ENCODE measurements at regions of chrX and their contacts with region 1.

Region 1: GRCh38 chrX:154490414-154491083 is at the start of gene SLC10A3:
- DNase-seq: peak; percentile 87 to 96 (median 90)
- ATAC-seq: peak; percentile 85
- H3K4me3 ChIP-seq: peak within 1 kb of the TSS; percentile 72
- H3K27ac ChIP-seq: peak within 1 kb of the TSS; percentile 87
- H3K4me1 ChIP-seq: peaks cover 36 to 73% of the 10 kb centered on the region in 2 experiments; a peak in 4 of 5 replicates
- H3K27me3 ChIP-seq: no peaks in the 10 kb centered on the region
- CTCF ChIP-seq: peak in 2 of 3 experiments; percentile 21 to 42; a peak in 2 of 6 replicates
- EP300 ChIP-seq: no peak
- POLR2A ChIP-seq: peak; percentile 78
- RAD21 ChIP-seq: peak in 1 of 2 experiments; percentile 11; a peak in 2 of 4 replicates
- polyA plus RNA-seq, gene SLC10A3: 5.2 to 6.0 TPM

Region 2: GRCh38 chrX:154378782-154379591 is 111.6 kb before region 1 on chrX and contains the start of gene EMD:
- CTCF ChIA-PET with region 1: no interaction called
- POLR2A ChIA-PET with region 1: no interaction called
- in situ Hi-C with region 1: no loop called
- intact Hi-C with region 1: loop called (anchors 10 kb)
- DNase-seq: peak; percentile 80 to 98 (median 88)
- ATAC-seq: peak; percentile 92
- H3K4me3 ChIP-seq: peak within 1 kb of the TSS; percentile 91
- H3K27ac ChIP-seq: peak within 1 kb of the TSS; percentile 96
- H3K4me1 ChIP-seq: peaks cover 16 to 57% of the 10 kb centered on the region in 2 experiments
- H3K27me3 ChIP-seq: no peaks in the 10 kb centered on the region
- CTCF ChIP-seq: no peak; a peak in 1 of 6 replicates
- EP300 ChIP-seq: peak; percentile 21; the same call in 1 of the 2 replicates
- POLR2A ChIP-seq: peak; percentile 79
- RAD21 ChIP-seq: no peak
- polyA plus RNA-seq, gene EMD: 2.3 to 3.1 TPM

Region 3: DNA sequence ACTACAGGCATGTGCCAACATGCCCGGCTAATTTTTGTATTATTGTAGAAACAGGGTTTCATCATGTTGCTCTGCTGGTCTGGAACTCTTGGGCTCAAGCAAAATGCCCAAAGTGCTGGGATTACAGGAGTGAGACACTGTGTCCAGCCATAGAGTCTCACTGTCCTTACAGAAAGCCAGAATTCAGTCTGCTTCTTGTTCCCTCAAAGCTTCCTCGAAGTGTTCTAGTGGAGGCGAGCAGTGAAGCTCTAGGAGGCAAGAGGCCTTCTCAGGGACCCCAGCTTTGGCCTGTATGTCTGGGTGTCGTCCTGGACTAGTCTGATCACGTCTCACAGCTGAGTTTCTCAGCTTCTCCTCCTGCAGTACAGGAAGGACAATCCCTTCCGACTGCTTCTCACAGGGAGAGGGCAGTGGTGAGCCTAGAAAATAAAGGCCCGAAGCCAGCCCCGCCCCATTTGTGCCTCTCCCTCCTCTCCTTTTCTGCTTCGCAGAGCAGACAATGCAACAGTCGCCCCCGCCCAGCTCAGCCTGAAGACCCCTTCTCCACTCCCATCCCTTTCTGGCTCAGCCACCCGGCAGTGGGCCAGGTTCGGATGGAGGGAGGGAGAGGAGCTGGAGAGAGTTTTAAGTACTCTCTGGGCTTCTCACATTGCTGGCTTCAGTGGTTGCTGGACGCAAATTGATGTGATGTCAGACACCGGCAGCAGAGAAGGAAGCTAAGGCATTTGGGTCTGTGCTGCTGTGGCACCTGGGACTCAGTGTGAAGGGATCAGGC is 36.5 kb after region 1 on chrX:
- CTCF ChIA-PET with region 1: no interaction called
- POLR2A ChIA-PET with region 1: interaction called, 5 read pairs
- in situ Hi-C with region 1: no loop called
- intact Hi-C with region 1: loop called (anchors 5 kb)
- DNase-seq: peak; percentile 67 to 86 (median 70)
- ATAC-seq: peak; percentile 95
- H3K4me3 ChIP-seq: no peak overlapping the region
- H3K27ac ChIP-seq: peak overlapping the region; percentile 68
- H3K4me1 ChIP-seq: peaks cover 8 to 17% of the 10 kb centered on the region in 2 experiments; a peak in 4 of 5 replicates
- H3K27me3 ChIP-seq: no peaks in the 10 kb centered on the region
- CTCF ChIP-seq: peak; percentile 71 to 76 (median 76)
- EP300 ChIP-seq: no peak; the same call in 1 of the 2 replicates
- POLR2A ChIP-seq: 0 out of 2 replicates have a peak, but pooled peaks have one; percentile 39
- RAD21 ChIP-seq: peak; percentile 24 to 60; a peak in 3 of 4 replicates

Region 4: GRCh38 chrX:154918060-154918483 is 427.5 kb after region 1 on chrX:
- CTCF ChIA-PET with region 1: no interaction called
- POLR2A ChIA-PET with region 1: no interaction called
- in situ Hi-C with region 1: no loop called
- intact Hi-C with region 1: no loop called
- DNase-seq: peak; percentile 30 to 68 (median 33)
- ATAC-seq: peak; percentile 87
- H3K4me3 ChIP-seq: peak overlapping the region; percentile 29
- H3K27ac ChIP-seq: no peak overlapping the region; the same call in 2 of the 3 replicates
- H3K4me1 ChIP-seq: no peaks in the 10 kb centered on the region; a peak in 1 of 5 replicates
- H3K27me3 ChIP-seq: no peaks in the 10 kb centered on the region
- CTCF ChIP-seq: peak; percentile 62 to 73 (median 73); a peak in 5 of 6 replicates
- EP300 ChIP-seq: no peak
- POLR2A ChIP-seq: no peak
- RAD21 ChIP-seq: peak; percentile 59 to 87